ENCODE measurements at regions of chr3 and their contacts with region 1.

Region 1: DNA sequence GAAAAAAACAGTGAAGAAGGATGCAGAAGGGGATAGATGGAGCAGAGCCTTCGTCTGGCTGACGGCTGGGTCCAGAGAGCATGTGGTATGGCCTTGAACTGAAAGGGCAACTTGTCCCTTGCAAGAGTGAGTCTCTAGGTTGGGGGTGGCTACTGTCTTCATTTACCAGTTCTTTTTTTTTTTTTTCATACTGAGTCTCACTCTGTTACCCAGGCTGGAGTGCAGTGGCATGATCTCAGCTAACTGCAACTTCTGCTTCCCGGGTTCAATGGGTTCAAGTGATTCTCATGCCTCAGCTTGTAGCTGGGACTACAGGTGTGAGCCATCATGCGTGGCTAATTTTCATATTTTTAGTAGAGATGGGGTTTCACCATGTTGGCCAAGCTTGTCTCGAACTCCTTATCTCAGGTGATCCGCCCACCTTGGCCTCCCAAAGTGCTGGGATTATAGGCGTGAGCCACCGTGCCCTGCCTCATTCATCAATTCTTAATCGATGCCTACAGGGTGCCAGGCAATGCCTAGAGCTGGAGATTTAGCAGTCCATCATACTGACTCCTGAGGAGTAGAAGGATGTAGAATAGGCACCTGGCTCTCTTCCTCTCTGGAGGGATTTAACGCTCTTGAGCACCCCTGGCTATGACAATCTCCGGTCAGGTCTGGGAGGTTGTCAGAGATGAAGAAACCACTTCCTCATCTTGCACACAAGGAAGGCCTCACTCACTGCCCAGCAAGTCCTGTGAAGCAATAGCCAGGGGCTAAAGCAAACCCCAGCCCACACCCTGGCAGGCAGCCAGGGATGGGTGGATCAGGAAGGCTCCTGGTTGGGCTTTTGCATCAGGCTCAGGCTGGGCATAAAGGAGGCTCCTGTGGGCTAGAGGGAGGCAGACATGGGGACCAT is at the start of gene CAMP:
- DNase-seq: peak; percentile 94
- H3K4me3 ChIP-seq: no peak within 1 kb of the TSS
- H3K27ac ChIP-seq: peak within 1 kb of the TSS; percentile 49
- H3K4me1 ChIP-seq: peaks cover 22% of the 10 kb centered on the region
- H3K27me3 ChIP-seq: no peaks in the 10 kb centered on the region
- CTCF ChIP-seq: no peak
- total RNA-seq, gene CAMP: 5.3 to 7.0 TPM

Region 2: DNA sequence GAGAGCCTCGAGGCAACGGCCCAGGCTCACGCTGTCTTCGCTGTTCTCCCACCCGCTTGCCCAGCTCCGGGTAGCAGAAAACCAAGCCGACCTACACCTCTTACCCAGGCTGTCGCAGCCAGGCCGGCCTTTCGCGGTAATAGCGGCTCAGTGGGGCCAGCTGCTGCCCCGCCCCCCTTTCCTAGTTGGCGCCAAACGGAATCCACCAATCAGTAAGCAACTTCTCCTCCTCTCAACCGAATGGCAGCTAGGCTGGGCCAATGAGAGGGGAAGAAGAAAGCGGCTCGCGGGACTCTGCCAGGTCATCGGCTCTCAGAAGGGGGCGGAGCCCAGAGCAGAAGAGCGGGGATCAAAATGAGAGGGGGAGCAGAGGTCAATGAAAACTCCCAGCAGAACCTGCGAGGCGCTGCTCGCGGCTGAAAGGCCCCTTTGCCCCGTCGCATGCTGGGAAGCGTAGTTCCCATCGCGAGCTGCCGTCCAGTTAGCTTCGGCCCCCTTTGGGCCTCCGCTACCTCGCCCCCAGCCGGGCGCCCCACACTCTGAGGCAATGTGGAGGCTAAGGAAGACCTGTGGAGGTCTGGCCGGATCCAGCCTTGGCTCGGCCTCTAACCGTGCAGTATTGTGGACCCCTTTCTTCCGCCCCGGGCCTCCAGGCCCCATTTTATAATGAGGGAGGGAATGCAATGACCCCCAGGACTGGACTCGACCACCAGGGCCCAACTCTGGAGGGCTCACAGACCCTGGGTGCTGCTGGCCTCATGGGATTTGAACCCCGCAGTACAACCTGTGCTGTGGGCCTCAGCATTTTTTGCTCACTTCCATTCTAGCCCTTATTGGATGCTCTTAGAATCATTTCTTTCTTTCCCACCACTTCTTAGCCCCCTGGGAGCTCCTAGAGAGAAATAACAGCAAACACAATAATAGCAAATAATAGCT is 34.3 kb before region 1 on chr3 and contains the start of gene CDC25A:
- CTCF ChIA-PET with region 1: no interaction called
- dilution Hi-C with region 1: no loop called
- in situ Hi-C with region 1: no loop called
- intact Hi-C with region 1: no loop called
- DNase-seq: peak; percentile 98
- H3K4me3 ChIP-seq: peak within 1 kb of the TSS; percentile 85 to 97 (median 89)
- H3K27ac ChIP-seq: peak within 1 kb of the TSS; percentile 64
- H3K4me1 ChIP-seq: peaks cover 12% of the 10 kb centered on the region
- H3K27me3 ChIP-seq: no peaks in the 10 kb centered on the region
- CTCF ChIP-seq: no peak
- total RNA-seq, gene CDC25A: 7.3 to 17.8 TPM

Region 3: GRCh38 chr3:48273594-48274211 is 50.8 kb after region 1 on chr3:
- CTCF ChIA-PET with region 1: no interaction called
- dilution Hi-C with region 1: no loop called
- in situ Hi-C with region 1: no loop called
- intact Hi-C with region 1: no loop called
- DNase-seq: peak; percentile 34
- H3K4me3 ChIP-seq: no peak overlapping the region
- H3K27ac ChIP-seq: no peak overlapping the region
- H3K4me1 ChIP-seq: peaks cover 15% of the 10 kb centered on the region
- H3K27me3 ChIP-seq: no peaks in the 10 kb centered on the region
- CTCF ChIP-seq: peak; percentile 84 to 86

Region 4: GRCh38 chr3:48301020-48301796 is 78.3 kb after region 1 on chr3:
- CTCF ChIA-PET with region 1: no interaction called
- dilution Hi-C with region 1: no loop called
- in situ Hi-C with region 1: no loop called
- intact Hi-C with region 1: loop called (anchors 2 kb)
- DNase-seq: peak; percentile 87
- H3K4me3 ChIP-seq: peak within 1 kb of the TSS; percentile 72 to 92 (median 85)
- H3K27ac ChIP-seq: peak within 1 kb of the TSS; percentile 56
- H3K4me1 ChIP-seq: peaks cover 7% of the 10 kb centered on the region
- H3K27me3 ChIP-seq: no peaks in the 10 kb centered on the region
- CTCF ChIP-seq: peak in 1 of 2 donors; percentile 0